B cell (primary cell): ENCODE measurements at regions of chr16 and their contacts with region 1.

Region 1: DNA sequence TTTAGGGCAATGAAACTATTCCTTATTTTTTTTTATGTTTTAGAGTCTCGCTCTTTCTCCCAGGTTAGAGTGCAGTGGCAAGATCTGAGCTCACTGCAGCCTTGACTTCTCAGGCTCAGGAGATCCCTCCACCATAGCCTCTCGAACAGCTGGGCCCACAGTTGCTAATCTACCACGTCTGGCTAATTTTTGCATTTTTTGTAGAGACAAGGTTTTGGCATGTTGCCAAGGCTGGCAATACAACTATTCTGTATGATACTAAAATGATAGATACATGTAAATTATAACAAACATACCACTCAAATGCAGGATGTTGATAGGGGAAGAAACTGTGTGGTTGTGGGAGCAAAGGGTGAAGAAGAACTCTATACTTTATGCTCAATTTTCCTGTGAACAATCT is 401.3 kb downstream of the ZFHX3 start:
- DNase-seq: no peak
- ATAC-seq: no peak
- H3K4me3 ChIP-seq: no peak overlapping the region
- H3K4me3 Mint-ChIP-seq: no peak overlapping the region
- H3K27ac ChIP-seq: no peak overlapping the region
- H3K27ac Mint-ChIP-seq: no peak overlapping the region
- H3K4me1 ChIP-seq: peaks cover 0 to 5% of the 10 kb centered on the region in 2 donors
- H3K4me1 Mint-ChIP-seq: peaks cover 7% of the 10 kb centered on the region
- H3K27me3 ChIP-seq: no peaks in the 10 kb centered on the region
- H3K27me3 Mint-ChIP-seq: no peaks in the 10 kb centered on the region
- CTCF ChIP-seq: no peak

Region 2: GRCh38 chr16:72658888-72659717 is 12.5 kb after region 1 on chr16:
- CTCF ChIA-PET with region 1: no interaction called
- POLR2A ChIA-PET with region 1: interaction called, 11 read pairs
- intact Hi-C with region 1: no loop called
- DNase-seq: no peak
- ATAC-seq: peak; percentile 74
- H3K4me3 ChIP-seq: no peak overlapping the region
- H3K4me3 Mint-ChIP-seq: peak overlapping the region; percentile 64
- H3K27ac ChIP-seq: peak overlapping the region in 1 of 2 donors; percentile 21
- H3K27ac Mint-ChIP-seq: peak overlapping the region; percentile 83
- H3K4me1 ChIP-seq: peaks cover 17 to 22% of the 10 kb centered on the region in 2 donors
- H3K4me1 Mint-ChIP-seq: peaks cover 30% of the 10 kb centered on the region
- H3K27me3 ChIP-seq: no peaks in the 10 kb centered on the region
- H3K27me3 Mint-ChIP-seq: no peaks in the 10 kb centered on the region
- CTCF ChIP-seq: no peak